Heart right ventricle (tissue), 16 donors: ENCODE measurements at regions of chr17 and their contacts with region 1.

Region 1: GRCh38 chr17:20009302-20010098 is at the start of gene SPECC1:
- DNase-seq: peak; percentile 74 to 87
- ATAC-seq: peak; percentile 45 to 99 (median 96)
- H3K4me3 ChIP-seq: peak within 1 kb of the TSS; percentile 75 to 89 (median 79)
- H3K27ac ChIP-seq: peak within 1 kb of the TSS; percentile 77 to 91 (median 86)
- H3K4me1 ChIP-seq: peaks cover 0 to 26% (median 12%) of the 10 kb centered on the region in 9 donors
- H3K27me3 ChIP-seq: peaks cover 0 to 59% (median 5%) of the 10 kb centered on the region in 7 donors
- CTCF ChIP-seq: peak; percentile 38 to 100 (median 98)
- total RNA-seq, gene SPECC1: 6.8 to 15.2 (median 9.7) TPM

Region 2: GRCh38 chr17:19533718-19534561 is 475.6 kb before region 1 on chr17 and contains the start of gene SLC47A1:
- intact Hi-C with region 1: no loop called
- DNase-seq: peak in 1 of 2 donors; percentile 42
- ATAC-seq: peak; percentile 84 to 93 (median 90)
- H3K4me3 ChIP-seq: peak within 1 kb of the TSS; percentile 44 to 69 (median 64)
- H3K27ac ChIP-seq: peak within 1 kb of the TSS in 4 of 10 donors; percentile 36 to 56 (median 44)
- H3K4me1 ChIP-seq: peaks cover 0 to 26% (median 13%) of the 10 kb centered on the region in 9 donors
- H3K27me3 ChIP-seq: peaks cover 0 to 46% (median 27%) of the 10 kb centered on the region in 7 donors
- CTCF ChIP-seq: no peak
- total RNA-seq, gene SLC47A1: 2.1 to 20.3 (median 9.2) TPM

Region 3: DNA sequence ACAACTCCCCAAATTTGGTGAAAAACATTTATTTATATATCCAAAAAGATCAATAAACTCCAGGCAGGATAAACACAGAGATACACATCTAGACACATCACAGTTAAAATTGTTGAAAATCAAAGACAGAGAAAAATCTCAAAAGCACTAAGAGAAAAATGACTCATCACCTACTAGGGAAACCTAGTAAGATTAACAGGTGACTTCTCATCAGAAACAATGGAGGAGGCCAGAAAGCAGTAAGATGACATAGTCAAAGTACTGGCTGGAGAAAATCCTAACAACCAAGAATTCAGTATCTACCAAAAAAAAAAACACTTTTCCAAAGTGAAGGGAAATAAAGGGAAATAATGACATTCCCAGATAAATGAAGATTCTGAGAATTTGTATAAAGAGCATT is 175.6 kb before region 1 on chr17:
- intact Hi-C with region 1: no loop called
- DNase-seq: no peak
- ATAC-seq: no peak
- H3K4me3 ChIP-seq: no peak overlapping the region
- H3K27ac ChIP-seq: no peak overlapping the region
- H3K4me1 ChIP-seq: no peaks in the 10 kb centered on the region
- H3K27me3 ChIP-seq: no peaks in the 10 kb centered on the region
- CTCF ChIP-seq: no peak

Region 4: GRCh38 chr17:19876529-19877161 is 132.9 kb before region 1 on chr17:
- intact Hi-C with region 1: no loop called
- DNase-seq: peak; percentile 34 to 60
- ATAC-seq: peak; percentile 76 to 93 (median 84)
- H3K4me3 ChIP-seq: no peak overlapping the region
- H3K27ac ChIP-seq: peak overlapping the region in 1 of 10 donors; percentile 71
- H3K4me1 ChIP-seq: peaks cover 0 to 40% (median 0%) of the 10 kb centered on the region in 9 donors
- H3K27me3 ChIP-seq: peaks cover 0 to 4% (median 2%) of the 10 kb centered on the region in 7 donors
- CTCF ChIP-seq: no peak

Region 5: GRCh38 chr17:19937522-19937921 is 72.0 kb before region 1 on chr17:
- intact Hi-C with region 1: no loop called
- DNase-seq: no peak
- ATAC-seq: no peak
- H3K4me3 ChIP-seq: no peak overlapping the region
- H3K27ac ChIP-seq: no peak overlapping the region
- H3K4me1 ChIP-seq: peaks cover 0 to 21% (median 13%) of the 10 kb centered on the region in 9 donors
- H3K27me3 ChIP-seq: no peaks in the 10 kb centered on the region
- CTCF ChIP-seq: no peak

Region 6: DNA sequence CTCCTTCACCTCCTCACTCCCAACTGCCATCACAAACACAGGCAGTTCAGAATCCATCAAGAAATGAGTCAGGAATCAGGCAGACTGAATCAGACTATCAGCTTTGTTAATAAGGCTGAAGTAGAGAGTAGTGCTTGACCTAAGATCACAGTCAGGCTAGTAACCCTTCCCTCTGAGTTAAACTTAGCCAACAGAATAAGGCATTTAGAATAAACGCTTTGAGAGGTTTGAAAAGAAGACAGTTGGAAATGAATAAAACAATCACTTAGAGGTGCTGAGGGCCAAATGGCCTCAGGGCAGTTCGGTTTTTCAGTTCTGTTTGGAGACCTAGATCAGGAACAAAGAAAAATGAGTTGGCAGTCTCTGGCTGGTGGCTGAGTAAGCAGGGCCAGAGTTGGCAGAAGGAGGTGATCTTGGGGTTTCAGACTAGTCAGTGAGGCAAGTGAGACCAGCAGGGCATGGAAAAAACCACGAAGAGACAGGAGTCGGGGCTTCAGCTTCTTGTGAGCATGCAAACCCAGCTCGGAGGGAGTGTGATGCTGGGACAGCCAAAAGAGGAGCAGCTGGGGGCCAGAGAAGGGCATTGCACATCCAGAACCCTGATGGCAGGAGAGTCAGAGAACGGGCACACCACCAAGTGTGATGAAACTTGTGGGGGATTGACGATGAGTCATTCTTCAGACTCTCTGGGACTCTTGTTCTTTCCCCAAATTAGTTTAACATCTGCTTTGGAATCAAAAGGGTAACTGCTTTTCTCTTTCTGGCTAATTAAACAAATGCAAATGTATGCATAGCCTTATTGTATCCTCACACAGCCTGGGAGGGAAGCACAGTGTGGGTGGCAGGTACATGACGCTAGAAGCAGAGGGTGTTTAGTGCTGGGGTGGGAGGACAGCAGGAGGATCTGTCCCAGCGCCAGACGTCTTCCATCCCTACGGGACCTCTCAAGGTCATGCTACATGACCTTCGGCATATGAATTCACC is 54.5 kb after region 1 on chr17:
- intact Hi-C with region 1: loop called in 3 of 10 experiments (anchors 5 to 10 kb)
- DNase-seq: peak; percentile 64 to 67
- ATAC-seq: peak; percentile 68 to 94 (median 84)
- H3K4me3 ChIP-seq: peak overlapping the region in 1 of 10 donors; percentile 6
- H3K27ac ChIP-seq: peak overlapping the region; percentile 51 to 85 (median 76)
- H3K4me1 ChIP-seq: peaks cover 0 to 46% (median 23%) of the 10 kb centered on the region in 9 donors
- H3K27me3 ChIP-seq: no peaks in the 10 kb centered on the region
- CTCF ChIP-seq: no peak

Region 7: DNA sequence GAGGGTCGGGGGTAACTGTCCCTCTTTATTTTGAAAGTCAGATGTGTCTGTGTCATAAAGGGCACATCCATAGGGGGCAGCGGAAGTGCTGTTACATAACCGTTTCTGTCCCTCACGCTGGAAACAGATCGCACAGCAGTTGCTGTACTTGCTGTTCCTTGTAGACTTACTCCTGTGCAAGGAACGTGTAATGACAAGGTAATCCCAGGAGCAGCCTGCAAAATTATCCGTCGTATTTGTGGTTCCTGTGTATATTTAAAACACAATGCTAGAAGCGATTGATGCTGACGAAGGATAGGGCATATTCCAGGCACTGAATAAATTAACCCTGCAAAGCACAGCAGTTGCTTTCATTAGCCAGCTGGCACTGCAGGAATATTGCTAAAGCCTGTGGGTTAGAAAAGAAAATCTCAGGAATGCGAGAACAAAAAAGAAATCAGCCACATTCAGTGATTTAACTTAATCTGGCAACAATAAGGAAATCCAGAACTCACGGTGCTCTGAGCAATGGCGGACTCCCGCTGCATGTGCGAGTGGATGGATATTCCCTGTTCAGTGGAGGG is 75.9 kb after region 1 on chr17:
- intact Hi-C with region 1: loop called in 3 of 10 experiments (anchors 5 to 10 kb)
- DNase-seq: no peak
- ATAC-seq: no peak
- H3K4me3 ChIP-seq: no peak overlapping the region
- H3K27ac ChIP-seq: peak overlapping the region in 9 of 10 donors; percentile 46 to 96 (median 85)
- H3K4me1 ChIP-seq: peaks cover 9 to 57% (median 31%) of the 10 kb centered on the region in 9 donors
- H3K27me3 ChIP-seq: no peaks in the 10 kb centered on the region
- CTCF ChIP-seq: no peak

Region 8: DNA sequence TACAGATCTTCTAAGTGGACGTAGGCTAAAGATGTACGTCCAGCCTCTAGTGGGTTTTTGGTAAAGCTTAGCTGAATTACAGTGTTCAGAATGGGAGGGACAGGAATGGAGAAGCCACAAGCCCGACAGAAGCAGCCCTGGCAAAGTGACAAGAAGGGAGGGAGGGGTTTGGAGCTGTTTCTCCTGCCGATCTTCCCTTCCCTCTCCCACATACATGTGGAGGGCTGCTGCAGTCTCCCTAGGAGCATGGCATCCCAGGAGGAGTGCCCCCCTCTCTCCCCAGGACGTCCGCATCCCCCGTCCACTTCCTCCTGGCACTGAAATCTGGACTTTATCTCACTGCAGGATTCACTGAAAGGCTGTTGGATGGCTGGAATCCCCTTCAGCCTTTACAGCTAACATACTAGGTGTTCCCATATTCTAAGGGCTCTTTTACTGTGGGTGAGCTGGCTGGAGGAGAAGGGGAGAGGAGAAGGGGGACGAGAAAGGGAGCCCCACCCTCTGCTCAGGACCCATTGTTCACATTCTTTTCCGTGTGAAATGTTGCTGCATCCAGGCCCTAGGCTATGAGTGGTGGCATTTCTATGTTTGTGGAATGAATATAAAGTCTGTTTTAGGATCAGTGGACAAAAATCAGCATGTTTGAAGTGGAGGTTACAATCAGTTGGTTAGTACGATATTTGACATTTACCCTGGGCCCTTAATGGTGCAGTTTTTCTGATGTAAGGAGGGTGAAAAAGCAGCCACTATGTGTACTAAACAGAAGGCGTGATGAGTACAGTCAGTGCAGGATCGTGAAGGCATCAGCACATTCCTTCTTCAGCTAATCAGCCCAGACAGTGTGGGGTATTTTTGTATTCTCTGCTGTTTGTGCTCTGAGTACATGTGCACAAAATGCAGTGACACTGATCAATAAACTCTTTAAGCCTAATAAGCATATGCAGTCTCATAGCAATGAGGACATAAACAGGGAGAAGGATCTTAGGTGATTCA is 94.2 kb after region 1 on chr17:
- intact Hi-C with region 1: loop called in 5 of 10 experiments (anchors 5 to 10 kb)
- DNase-seq: peak in 1 of 2 donors; percentile 43
- ATAC-seq: peak in 6 of 8 donors; percentile 34 to 71 (median 45)
- H3K4me3 ChIP-seq: no peak overlapping the region
- H3K27ac ChIP-seq: peak overlapping the region in 4 of 10 donors; percentile 13 to 37 (median 28)
- H3K4me1 ChIP-seq: peaks cover 0 to 16% (median 11%) of the 10 kb centered on the region in 9 donors
- H3K27me3 ChIP-seq: peaks cover 0 to 17% (median 3%) of the 10 kb centered on the region in 7 donors
- CTCF ChIP-seq: no peak

Region 9: GRCh38 chr17:20226814-20227482 is 217.4 kb after region 1 on chr17:
- intact Hi-C with region 1: loop called in 1 of 10 experiments (anchors 10 kb)
- DNase-seq: peak; percentile 76 to 84
- ATAC-seq: peak; percentile 86 to 98 (median 96)
- H3K4me3 ChIP-seq: no peak overlapping the region
- H3K27ac ChIP-seq: no peak overlapping the region
- H3K4me1 ChIP-seq: peaks cover 0 to 13% (median 0%) of the 10 kb centered on the region in 9 donors
- H3K27me3 ChIP-seq: no peaks in the 10 kb centered on the region
- CTCF ChIP-seq: peak; percentile 56 to 89 (median 81)